ENCODE measurements at regions of chr5 and their contacts with region 1.

Region 1: GRCh38 chr5:41856644-41857491 is 13.4 kb downstream of the OXCT1 start:
- DNase-seq: peak; percentile 66 to 77 (median 70)
- H3K4me3 ChIP-seq: no peak overlapping the region
- H3K4me3 Mint-ChIP-seq: no peak overlapping the region
- H3K27ac ChIP-seq: no peak overlapping the region
- H3K27ac Mint-ChIP-seq: no peak overlapping the region
- H3K4me1 ChIP-seq: no peaks in the 10 kb centered on the region
- H3K4me1 Mint-ChIP-seq: peaks cover 7 to 10% (median 9%) of the 10 kb centered on the region in 4 donors
- H3K27me3 ChIP-seq: no peaks in the 10 kb centered on the region
- H3K27me3 Mint-ChIP-seq: no peaks in the 10 kb centered on the region

Region 2: DNA sequence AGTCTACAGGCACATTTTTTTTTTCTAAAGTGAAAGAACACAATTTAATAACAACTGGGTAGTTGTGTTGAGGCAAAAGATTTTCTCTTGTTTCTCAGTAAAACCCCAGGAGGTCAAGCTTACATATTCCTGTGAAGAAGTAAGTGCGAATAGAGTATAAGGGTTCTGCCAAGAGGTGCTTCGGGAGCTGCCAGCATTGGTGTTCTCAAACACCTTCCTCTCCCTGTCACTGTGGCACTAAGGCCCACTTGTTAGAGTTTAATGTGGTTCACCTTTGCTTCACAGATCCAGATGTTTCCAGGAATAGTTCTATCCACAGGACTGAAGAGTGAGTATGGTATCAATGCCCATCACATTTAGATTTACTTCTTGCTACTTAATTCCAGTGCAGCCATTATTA is 551.8 kb before region 1 on chr5:
- CTCF ChIA-PET with region 1: no interaction called
- POLR2A ChIA-PET with region 1: no interaction called
- intact Hi-C with region 1: no loop called
- DNase-seq: no peak
- H3K4me3 ChIP-seq: no peak overlapping the region
- H3K4me3 Mint-ChIP-seq: no peak overlapping the region
- H3K27ac ChIP-seq: no peak overlapping the region
- H3K27ac Mint-ChIP-seq: no peak overlapping the region
- H3K4me1 ChIP-seq: no peaks in the 10 kb centered on the region
- H3K4me1 Mint-ChIP-seq: no peaks in the 10 kb centered on the region
- H3K27me3 ChIP-seq: no peaks in the 10 kb centered on the region
- H3K27me3 Mint-ChIP-seq: no peaks in the 10 kb centered on the region

Region 3: DNA sequence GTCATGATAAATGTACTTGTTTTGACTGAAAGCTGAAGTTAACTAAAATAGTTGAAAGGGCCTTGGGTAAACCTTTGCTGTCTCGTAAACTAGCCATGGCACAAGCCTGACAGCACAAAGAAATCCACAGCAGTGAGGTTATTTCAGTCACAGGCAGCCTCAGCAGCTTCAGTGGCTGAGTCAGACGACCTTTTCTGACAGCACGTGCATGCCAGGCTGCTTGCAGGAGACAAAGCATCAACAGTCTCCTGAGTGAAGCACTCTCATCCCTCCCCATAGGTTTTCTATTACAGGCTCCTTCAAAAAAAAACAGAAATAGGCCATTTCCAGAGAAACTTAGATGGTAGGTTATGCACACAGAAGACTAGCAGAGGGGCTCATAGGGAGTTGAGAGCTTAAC is 21.2 kb before region 1 on chr5:
- CTCF ChIA-PET with region 1: interaction called, 37 read pairs
- POLR2A ChIA-PET with region 1: interaction called, 3 read pairs
- intact Hi-C with region 1: no loop called
- DNase-seq: no peak
- H3K4me3 ChIP-seq: no peak overlapping the region
- H3K4me3 Mint-ChIP-seq: no peak overlapping the region
- H3K27ac ChIP-seq: no peak overlapping the region
- H3K27ac Mint-ChIP-seq: no peak overlapping the region
- H3K4me1 ChIP-seq: no peaks in the 10 kb centered on the region
- H3K4me1 Mint-ChIP-seq: peaks cover 16 to 35% (median 22%) of the 10 kb centered on the region in 4 donors
- H3K27me3 ChIP-seq: no peaks in the 10 kb centered on the region
- H3K27me3 Mint-ChIP-seq: no peaks in the 10 kb centered on the region

Region 4: GRCh38 chr5:41903892-41904799 is 47.3 kb after region 1 on chr5 and contains the start of gene RIMOC1:
- CTCF ChIA-PET with region 1: interaction called, 6 read pairs
- POLR2A ChIA-PET with region 1: interaction called, 6 read pairs
- intact Hi-C with region 1: loop called (anchors 1 kb)
- DNase-seq: peak; percentile 96 to 98 (median 98)
- H3K4me3 ChIP-seq: peak within 1 kb of the TSS; percentile 82 to 90
- H3K4me3 Mint-ChIP-seq: peak within 1 kb of the TSS; percentile 93 to 99 (median 98)
- H3K27ac ChIP-seq: peak within 1 kb of the TSS; percentile 74
- H3K27ac Mint-ChIP-seq: peak within 1 kb of the TSS; percentile 96 to 100 (median 97)
- H3K4me1 ChIP-seq: peaks cover 16% of the 10 kb centered on the region
- H3K4me1 Mint-ChIP-seq: peaks cover 22 to 48% (median 29%) of the 10 kb centered on the region in 4 donors
- H3K27me3 ChIP-seq: no peaks in the 10 kb centered on the region
- H3K27me3 Mint-ChIP-seq: peaks cover 0 to 2% of the 10 kb centered on the region in 2 donors
- total RNA-seq, gene RIMOC1: 33.1 to 33.7 TPM

Region 5: DNA sequence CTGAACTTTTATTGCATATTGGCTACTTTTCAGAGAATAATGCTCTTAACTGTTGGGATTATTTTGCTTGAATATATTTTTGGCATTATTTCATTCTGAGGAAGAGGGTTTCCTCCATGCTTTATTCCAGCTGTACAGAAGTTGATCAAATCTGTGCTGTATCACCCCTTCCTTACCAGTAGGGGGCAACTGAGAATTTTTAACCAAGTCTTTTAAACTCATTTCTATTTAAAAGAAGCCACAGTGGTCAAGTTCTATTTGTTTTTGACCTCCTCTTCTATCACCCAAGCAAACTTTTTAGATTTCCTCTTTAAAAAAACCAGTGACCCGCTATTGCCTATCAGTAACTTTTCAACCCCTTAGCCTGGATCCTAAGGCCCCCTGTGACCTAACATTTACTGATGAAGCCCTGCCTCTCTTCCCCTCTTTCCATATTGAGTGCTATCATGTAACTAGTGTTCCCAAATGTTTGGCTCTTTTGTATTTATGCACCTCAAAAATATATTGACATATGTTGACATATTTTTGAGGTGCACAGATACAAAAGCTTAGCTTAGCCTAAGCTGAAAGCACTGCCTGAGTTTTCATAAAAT is 148.8 kb after region 1 on chr5:
- CTCF ChIA-PET with region 1: interaction called, 11 read pairs
- POLR2A ChIA-PET with region 1: no interaction called
- intact Hi-C with region 1: loop called (anchors 1 kb)
- DNase-seq: peak in 3 of 5 donors; percentile 2 to 21 (median 5)
- H3K4me3 ChIP-seq: no peak overlapping the region
- H3K4me3 Mint-ChIP-seq: no peak overlapping the region
- H3K27ac ChIP-seq: no peak overlapping the region
- H3K27ac Mint-ChIP-seq: no peak overlapping the region
- H3K4me1 ChIP-seq: no peaks in the 10 kb centered on the region
- H3K4me1 Mint-ChIP-seq: peaks cover 0 to 2% (median 0%) of the 10 kb centered on the region in 4 donors
- H3K27me3 ChIP-seq: no peaks in the 10 kb centered on the region
- H3K27me3 Mint-ChIP-seq: peaks cover 2 to 6% of the 10 kb centered on the region in 2 donors

Region 6: GRCh38 chr5:42583322-42583721 is 726.5 kb after region 1 on chr5:
- CTCF ChIA-PET with region 1: interaction called, 14 read pairs
- POLR2A ChIA-PET with region 1: no interaction called
- intact Hi-C with region 1: loop called (anchors 2 kb)
- DNase-seq: peak in 4 of 5 donors; percentile 22 to 36 (median 30)
- H3K4me3 ChIP-seq: no peak overlapping the region
- H3K4me3 Mint-ChIP-seq: no peak overlapping the region
- H3K27ac ChIP-seq: no peak overlapping the region
- H3K27ac Mint-ChIP-seq: peak overlapping the region in 1 of 7 donors; percentile 1
- H3K4me1 ChIP-seq: no peaks in the 10 kb centered on the region
- H3K4me1 Mint-ChIP-seq: peaks cover 0 to 6% (median 2%) of the 10 kb centered on the region in 4 donors
- H3K27me3 ChIP-seq: no peaks in the 10 kb centered on the region
- H3K27me3 Mint-ChIP-seq: peaks cover 9% of the 10 kb centered on the region in 2 donors

Region 7: GRCh38 chr5:42666869-42667268 is 810.0 kb after region 1 on chr5:
- CTCF ChIA-PET with region 1: no interaction called
- POLR2A ChIA-PET with region 1: no interaction called
- intact Hi-C with region 1: no loop called
- DNase-seq: no peak
- H3K4me3 ChIP-seq: no peak overlapping the region
- H3K4me3 Mint-ChIP-seq: no peak overlapping the region
- H3K27ac ChIP-seq: no peak overlapping the region
- H3K27ac Mint-ChIP-seq: no peak overlapping the region
- H3K4me1 ChIP-seq: no peaks in the 10 kb centered on the region
- H3K4me1 Mint-ChIP-seq: no peaks in the 10 kb centered on the region
- H3K27me3 ChIP-seq: no peaks in the 10 kb centered on the region
- H3K27me3 Mint-ChIP-seq: peaks cover 0 to 3% of the 10 kb centered on the region in 2 donors

Region 8: GRCh38 chr5:42889311-42889933 is 1032.6 kb after region 1 on chr5:
- CTCF ChIA-PET with region 1: interaction called, 10 read pairs
- POLR2A ChIA-PET with region 1: no interaction called
- intact Hi-C with region 1: loop called (anchors 1 kb)
- DNase-seq: peak in 4 of 5 donors; percentile 48 to 54 (median 51)
- H3K4me3 ChIP-seq: no peak overlapping the region
- H3K4me3 Mint-ChIP-seq: no peak overlapping the region
- H3K27ac ChIP-seq: no peak overlapping the region
- H3K27ac Mint-ChIP-seq: no peak overlapping the region
- H3K4me1 ChIP-seq: no peaks in the 10 kb centered on the region
- H3K4me1 Mint-ChIP-seq: no peaks in the 10 kb centered on the region
- H3K27me3 ChIP-seq: no peaks in the 10 kb centered on the region
- H3K27me3 Mint-ChIP-seq: peaks cover 7 to 8% of the 10 kb centered on the region in 2 donors

Measured in CD4-positive, alpha-beta memory T cell (primary cell).